Right ventricle myocardium inferior (tissue), 1 donor: ENCODE measurements at regions of chr17 and their contacts with region 1.

Region 1: DNA sequence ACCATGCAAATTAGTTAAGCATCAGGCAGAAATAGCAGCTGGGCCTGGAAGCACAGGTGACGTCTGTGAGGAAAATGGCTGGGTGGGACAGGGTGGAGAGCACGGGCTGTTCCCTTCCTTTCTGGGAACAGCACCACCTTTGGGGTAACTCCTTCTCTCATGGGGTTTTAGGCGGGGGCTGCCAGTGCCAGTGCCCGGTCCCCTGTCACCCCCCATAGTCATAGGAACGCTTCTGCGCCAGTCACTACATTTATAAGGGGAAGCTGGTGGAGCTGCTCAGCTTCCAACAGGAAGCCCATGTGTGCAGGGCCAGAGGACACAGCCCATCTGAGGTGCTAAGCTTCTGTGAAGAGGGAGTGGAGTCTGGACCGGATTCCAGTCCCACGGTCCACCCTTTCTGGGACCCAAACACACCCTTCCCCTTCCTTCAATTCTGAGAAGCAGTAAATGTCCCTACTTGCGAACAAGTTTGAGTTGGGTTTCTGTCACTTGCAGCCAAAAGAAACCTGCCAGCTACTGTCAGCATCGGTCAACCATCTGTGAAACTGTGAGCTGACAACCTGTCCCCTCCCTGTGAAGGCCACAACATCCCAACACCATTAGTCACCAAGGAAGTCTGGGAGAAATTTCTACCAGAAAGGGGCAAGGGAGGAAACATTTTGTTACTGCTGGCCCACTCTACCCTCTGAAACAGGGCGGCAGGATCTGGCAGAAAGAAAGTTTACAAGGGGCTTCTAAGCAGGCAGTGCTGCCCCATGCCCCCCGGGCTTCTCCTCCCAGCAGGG is 86.0 kb upstream of the AMZ2 start:
- DNase-seq: no peak
- ATAC-seq: peak; percentile 63

Region 2: GRCh38 chr17:68178831-68179230 is 17.0 kb after region 1 on chr17:
- intact Hi-C with region 1: loop called (anchors 1 kb)
- DNase-seq: no peak
- ATAC-seq: no peak

Region 3: DNA sequence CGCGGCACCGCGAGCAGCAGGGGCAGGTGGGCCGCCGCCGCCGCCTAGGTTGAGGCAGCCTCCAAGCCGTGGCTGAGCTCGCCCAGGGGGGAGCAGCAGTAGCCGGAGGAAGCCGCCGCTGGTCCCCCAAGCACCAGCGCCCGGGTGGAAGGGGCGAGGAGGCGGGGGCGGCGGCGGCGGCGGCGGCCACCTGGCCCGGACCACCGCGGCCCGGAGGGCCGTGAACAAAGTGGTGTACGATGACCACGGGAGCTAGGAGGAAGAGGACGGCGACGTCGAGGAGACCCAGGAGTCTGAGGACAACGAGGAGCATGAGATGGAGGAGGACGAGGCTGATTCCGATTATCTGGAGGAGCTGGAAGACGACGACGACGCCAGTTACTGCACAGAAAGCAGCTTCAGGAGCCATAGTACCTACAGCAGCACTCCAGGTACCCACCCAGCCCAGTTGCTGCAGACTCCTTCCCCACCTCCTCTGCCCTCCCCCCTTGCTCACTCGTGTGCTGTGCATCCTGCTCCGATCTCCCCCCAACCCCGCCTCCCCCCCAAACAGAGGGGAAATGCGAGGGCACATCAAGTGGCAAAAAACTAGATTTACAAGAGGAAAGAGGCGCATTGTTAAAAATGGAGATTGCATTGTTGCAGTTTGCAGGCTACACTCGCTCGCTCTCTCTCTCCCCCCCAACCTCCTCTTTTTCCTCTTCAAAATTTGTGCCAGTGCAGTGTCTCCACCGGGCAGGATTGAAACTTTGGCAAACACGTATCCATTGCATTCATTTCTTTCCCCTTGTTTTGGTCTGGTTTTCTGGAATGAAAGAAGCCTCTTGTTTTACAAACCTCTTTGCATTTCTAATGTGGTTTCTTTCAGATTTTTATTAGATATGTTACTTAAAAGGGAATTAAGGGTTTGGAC is 44.2 kb after region 1 on chr17:
- intact Hi-C with region 1: no loop called
- DNase-seq: no peak
- ATAC-seq: no peak